Left colon (tissue), 2 donors: ENCODE measurements at regions of chr12 and their contacts with region 1.

Region 1: DNA sequence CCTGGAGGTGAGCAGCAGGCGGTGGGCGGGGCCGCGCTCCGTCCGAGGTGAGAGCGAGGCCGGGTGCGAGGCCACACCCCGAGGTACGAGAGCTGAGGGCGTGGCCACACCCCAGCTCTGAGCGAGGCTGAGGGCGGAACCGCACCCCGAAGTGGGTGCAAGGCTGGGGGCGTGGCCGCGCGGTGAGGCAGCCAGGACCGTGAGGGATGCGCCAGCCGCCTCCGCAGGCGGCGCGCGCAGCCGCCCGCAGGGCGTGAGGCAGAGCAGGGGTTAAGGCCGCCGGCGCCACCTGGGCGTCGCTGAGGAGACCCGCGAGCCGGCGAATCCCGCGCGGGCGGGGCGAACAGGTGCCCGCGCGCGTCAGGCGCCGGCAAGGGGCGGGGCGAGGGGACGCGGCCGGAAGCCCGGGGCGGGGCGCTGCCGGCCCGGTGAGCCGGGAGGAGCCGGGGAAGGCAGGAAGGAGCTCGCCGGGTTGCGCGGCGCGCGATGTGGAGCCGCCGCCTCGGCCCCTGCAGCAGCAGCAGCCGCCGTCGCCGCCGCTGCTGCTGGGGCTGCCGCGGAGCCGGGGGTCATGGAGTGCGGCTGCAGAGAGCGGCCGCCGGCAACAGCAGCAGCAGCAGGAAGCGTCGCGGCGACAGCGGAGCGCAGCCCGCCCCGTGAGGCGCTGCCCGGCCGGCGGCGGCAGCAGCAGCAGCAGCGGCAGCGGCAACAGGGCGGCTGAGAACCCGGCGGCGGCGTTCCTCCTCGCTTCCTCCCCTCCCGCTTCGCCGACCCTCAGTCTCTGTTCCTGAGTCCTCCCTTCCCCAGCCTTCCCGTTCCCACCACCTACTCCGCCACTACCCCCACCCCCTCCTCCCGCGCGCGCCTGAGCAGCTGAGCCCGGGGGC is at the start of gene BICDL1:
- DNase-seq: peak; percentile 90 to 97
- ATAC-seq: peak; percentile 94
- total RNA-seq, gene BICDL1: 6.6 to 9.1 TPM

Region 2: DNA sequence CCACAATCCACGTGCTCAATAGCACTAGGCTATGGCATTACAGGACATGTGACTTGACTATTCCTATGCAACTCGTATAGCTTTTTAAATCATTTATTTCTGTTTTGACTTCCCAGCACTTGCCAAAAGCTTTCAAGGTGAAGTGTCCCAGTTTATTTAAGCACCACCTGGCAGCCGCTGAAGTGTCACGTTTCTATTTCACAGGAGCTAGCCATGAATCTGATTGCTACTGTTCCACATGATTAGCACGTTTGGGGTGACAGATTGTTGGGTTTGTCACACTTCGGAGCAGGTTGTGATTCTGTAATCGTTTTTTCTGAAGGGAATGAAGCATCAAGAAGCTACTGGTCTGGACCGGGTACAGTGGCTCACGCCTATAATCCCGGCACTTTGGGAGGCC is 39.9 kb before region 1 on chr12:
- intact Hi-C with region 1: no loop called
- DNase-seq: no peak
- ATAC-seq: no peak

Region 3: GRCh38 chr12:120086801-120087621 is 98.0 kb after region 1 on chr12:
- intact Hi-C with region 1: loop called in 1 of 2 experiments (anchors 10 kb)
- DNase-seq: peak; percentile 98
- ATAC-seq: peak; percentile 92

Region 4: GRCh38 chr12:120489018-120489417 is 500.0 kb after region 1 on chr12:
- intact Hi-C with region 1: no loop called
- DNase-seq: peak in 1 of 2 donors; percentile 18
- ATAC-seq: peak; percentile 94